AG04449 (cell line): ENCODE measurements at regions of chr17 and their contacts with region 1.

Region 1: GRCh38 chr17:58722696-58723095 is 30.3 kb downstream of the RAD51C start:
- DNase-seq: no peak
- H3K4me3 ChIP-seq: no peak overlapping the region
- CTCF ChIP-seq: no peak

Region 2: GRCh38 chr17:58710936-58711775 is 11.5 kb before region 1 on chr17:
- CTCF ChIA-PET with region 1: interaction called, 11 read pairs
- POLR2A ChIA-PET with region 1: interaction called, 3 read pairs
- DNase-seq: no peak
- H3K4me3 ChIP-seq: no peak overlapping the region
- CTCF ChIP-seq: peak; percentile 41

Region 3: GRCh38 chr17:58786613-58787295 is 64.1 kb after region 1 on chr17:
- CTCF ChIA-PET with region 1: no interaction called
- POLR2A ChIA-PET with region 1: no interaction called
- DNase-seq: peak; percentile 34
- H3K4me3 ChIP-seq: no peak overlapping the region
- CTCF ChIP-seq: no peak